MCF 10A (cell line): ENCODE measurements at regions of chr14 and their contacts with region 1.

Region 1: DNA sequence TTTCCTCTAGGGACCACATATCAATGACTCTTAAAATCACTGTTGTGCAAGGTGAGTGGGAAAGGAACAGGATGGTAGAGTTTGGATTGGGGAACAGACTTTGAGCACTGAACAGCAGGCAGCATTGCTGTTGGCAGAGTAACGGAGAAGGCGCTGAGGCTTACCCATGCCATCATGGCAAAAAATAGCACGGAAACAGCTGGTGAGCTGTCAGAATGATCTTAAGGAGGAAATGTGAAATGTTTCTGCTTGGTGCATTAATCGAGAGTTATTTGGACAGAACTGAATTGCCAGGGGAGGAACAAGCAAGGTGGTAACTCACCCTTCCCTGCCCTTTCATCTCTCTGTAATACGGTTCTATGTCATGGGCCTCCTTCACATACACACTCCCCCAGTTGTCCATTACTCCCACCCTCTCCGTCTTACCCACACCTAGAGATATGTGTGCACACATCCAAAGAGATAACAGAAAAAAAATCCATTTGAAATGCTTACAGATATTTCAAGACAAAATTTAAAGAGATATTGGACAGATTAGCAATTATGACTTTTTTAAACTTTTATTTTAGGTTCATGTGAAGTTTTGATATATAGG is 572.5 kb downstream of the DIO2 start:
- DNase-seq: no peak
- H3K4me3 Mint-ChIP-seq: no peak overlapping the region
- H3K27ac Mint-ChIP-seq: no peak overlapping the region
- H3K4me1 Mint-ChIP-seq: no peaks in the 10 kb centered on the region
- H3K27me3 Mint-ChIP-seq: peaks cover 20% of the 10 kb centered on the region
- CTCF ChIP-seq: no peak

Region 2: GRCh38 chr14:79649856-79650255 is 11.1 kb after region 1 on chr14:
- CTCF ChIA-PET with region 1: no interaction called
- POLR2A ChIA-PET with region 1: no interaction called
- intact Hi-C with region 1: loop called (anchors 1 kb)
- DNase-seq: no peak
- H3K4me3 Mint-ChIP-seq: no peak overlapping the region
- H3K27ac Mint-ChIP-seq: no peak overlapping the region
- H3K4me1 Mint-ChIP-seq: no peaks in the 10 kb centered on the region
- H3K27me3 Mint-ChIP-seq: no peaks in the 10 kb centered on the region
- CTCF ChIP-seq: no peak